A549 (cell line): ENCODE measurements at regions of chr15 and their contacts with region 1.

Region 1: DNA sequence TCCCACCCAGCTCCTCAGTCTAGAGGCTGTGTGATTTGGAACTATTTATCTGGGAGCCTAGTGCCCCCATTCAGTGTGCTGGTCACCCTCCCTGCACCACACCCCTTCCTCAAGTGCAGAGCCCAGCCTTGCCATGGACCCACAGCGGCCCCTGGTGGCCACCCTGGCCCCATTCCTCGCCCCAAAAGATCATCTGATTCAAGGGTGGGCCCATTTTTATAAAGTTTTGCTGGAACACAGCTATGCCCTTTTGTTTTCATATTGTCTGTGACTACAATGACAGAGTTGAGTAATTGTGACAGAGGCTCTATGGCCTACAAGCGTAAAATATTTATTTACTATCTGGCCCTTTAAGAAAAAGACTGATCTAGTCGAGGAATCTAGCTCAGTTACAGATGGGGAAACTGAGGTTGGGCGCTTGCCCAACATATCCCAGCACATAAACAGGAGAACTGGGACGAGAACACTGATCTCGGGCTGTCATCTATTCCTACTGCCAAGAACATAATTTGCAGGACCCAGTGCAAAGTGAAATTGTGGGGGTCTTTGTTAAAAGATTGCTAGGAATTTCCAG is 1.8 kb downstream of the FES start:
- DNase-seq: peak in 1 of 2 experiments; percentile 61
- ATAC-seq: peak; percentile 57 to 82; a peak in 5 of 6 replicates
- H3K4me3 ChIP-seq: no peak overlapping the region
- H3K27ac ChIP-seq: peak overlapping the region in 1 of 2 experiments; percentile 19; a peak in 1 of 6 replicates
- H3K4me1 ChIP-seq: no peaks in the 10 kb centered on the region
- CTCF ChIP-seq: peak; percentile 99
- EP300 ChIP-seq: no peak
- POLR2A ChIP-seq: no peak
- RAD21 ChIP-seq: peak; percentile 100

Region 2: DNA sequence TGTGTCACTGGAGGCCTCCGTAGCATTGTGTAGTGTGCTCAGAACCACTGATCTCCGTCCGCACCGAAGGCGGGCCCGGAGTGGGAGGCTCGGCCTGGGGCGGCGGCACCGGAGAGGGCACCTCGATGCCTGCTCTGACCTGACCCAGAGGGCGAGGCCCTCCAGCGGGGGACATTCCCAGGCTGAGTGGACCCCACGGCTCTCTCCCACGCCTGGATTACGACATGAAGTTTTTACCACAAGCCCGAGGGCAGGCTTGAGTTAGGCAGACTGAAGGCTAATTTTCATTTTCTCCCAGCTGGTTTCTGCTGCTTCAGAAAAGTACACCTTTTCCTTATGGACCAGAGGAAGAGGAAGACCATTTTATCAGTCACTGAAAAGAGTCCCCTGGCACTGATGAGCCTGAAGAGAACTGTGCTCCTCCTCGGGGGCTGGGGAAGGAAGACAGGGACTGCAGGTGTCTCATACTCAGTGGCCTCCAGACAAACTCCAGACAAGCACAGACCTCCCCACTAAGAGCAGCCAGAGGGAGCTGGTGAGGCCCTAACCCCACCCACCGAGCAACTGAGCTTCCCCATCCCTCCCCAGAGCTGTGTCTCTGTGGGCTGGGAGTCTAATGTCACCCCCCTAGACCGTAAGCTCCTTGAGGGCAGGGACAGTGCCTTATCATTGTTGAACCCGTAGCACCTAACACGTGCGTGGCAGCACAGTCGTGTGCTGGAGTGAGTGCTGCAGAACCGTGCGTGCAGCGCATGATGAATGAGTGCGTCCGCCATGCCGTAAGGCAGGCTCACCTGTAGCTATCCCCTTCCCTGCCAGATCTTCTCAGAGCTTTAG is 243.4 kb before region 1 on chr15:
- CTCF ChIA-PET with region 1: interaction called, 265 read pairs
- POLR2A ChIA-PET with region 1: no interaction called
- DNase-seq: no peak
- ATAC-seq: peak in 1 of 2 experiments; percentile 21; a peak in 1 of 6 replicates
- H3K4me3 ChIP-seq: no peak overlapping the region
- H3K27ac ChIP-seq: no peak overlapping the region
- H3K4me1 ChIP-seq: peaks cover 4% of the 10 kb centered on the region; the same call in 2 of the 3 replicates
- CTCF ChIP-seq: no peak
- EP300 ChIP-seq: no peak
- POLR2A ChIP-seq: no peak; the same call in 1 of the 2 replicates
- RAD21 ChIP-seq: no peak

Region 3: GRCh38 chr15:90691982-90692773 is 193.9 kb before region 1 on chr15:
- CTCF ChIA-PET with region 1: interaction called, 19 read pairs
- POLR2A ChIA-PET with region 1: no interaction called
- DNase-seq: no peak
- ATAC-seq: no peak
- H3K4me3 ChIP-seq: no peak overlapping the region
- H3K27ac ChIP-seq: no peak overlapping the region
- H3K4me1 ChIP-seq: no peaks in the 10 kb centered on the region
- CTCF ChIP-seq: no peak
- EP300 ChIP-seq: no peak
- POLR2A ChIP-seq: no peak
- RAD21 ChIP-seq: no peak

Region 4: GRCh38 chr15:90762109-90762508 is 124.0 kb before region 1 on chr15:
- CTCF ChIA-PET with region 1: interaction called, 21 read pairs
- POLR2A ChIA-PET with region 1: no interaction called
- DNase-seq: no peak
- ATAC-seq: no peak
- H3K4me3 ChIP-seq: no peak overlapping the region
- H3K27ac ChIP-seq: no peak overlapping the region
- H3K4me1 ChIP-seq: no peaks in the 10 kb centered on the region
- CTCF ChIP-seq: no peak
- EP300 ChIP-seq: no peak
- POLR2A ChIP-seq: no peak
- RAD21 ChIP-seq: no peak

Region 5: DNA sequence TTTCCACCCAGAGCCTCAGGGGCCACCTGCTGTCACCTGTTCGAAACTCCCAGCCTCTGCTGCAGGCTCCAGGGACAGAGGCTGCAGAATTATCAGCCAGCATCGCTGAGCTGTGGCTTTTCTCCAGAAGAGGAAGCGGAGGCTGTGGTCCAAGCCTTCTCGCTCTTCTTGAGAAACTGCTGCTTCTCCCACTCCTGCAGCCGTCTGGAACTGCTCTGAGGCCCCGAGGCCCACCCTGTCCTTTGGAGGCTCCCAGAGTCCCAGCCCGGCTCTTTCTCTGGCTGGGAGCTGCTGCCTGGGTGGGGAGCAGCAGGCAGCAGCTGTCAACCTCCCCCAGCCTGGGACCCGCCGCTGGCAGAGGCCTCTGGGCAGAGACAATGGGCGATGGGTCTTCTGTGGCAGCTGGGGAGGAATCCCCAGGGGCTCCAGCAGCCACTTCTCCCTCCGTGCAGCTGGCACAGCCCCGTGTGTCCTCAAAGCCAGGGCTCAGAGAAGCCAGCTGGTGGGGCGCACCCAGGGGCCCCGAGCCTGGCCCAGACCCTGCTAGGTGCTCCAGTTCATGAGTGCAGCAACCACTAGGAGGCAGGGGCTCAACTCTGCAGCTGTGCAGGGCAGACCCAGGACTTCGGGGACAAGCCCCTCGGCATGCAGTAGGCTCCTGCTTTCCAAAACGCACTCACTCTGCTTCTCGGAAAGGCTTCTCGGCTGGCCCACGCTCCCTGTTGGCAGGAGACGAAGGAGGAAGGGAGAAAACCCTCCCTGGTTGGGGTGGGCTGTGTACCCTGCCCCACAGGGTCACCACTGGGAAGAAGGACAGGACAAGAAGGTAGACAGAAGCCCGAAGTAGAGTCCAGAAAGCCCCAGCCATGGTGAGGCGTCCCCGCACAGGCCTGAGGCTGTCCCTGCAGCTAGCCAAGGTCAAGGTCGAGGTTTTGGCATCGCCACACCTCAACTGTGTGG is 67.6 kb before region 1 on chr15:
- CTCF ChIA-PET with region 1: interaction called, 19 read pairs
- POLR2A ChIA-PET with region 1: no interaction called
- DNase-seq: no peak
- ATAC-seq: peak in 1 of 2 experiments; percentile 68; a peak in 3 of 6 replicates
- H3K4me3 ChIP-seq: no peak overlapping the region
- H3K27ac ChIP-seq: no peak overlapping the region
- H3K4me1 ChIP-seq: peaks cover 3% of the 10 kb centered on the region; the same call in 1 of the 3 replicates
- CTCF ChIP-seq: no peak
- EP300 ChIP-seq: no peak
- POLR2A ChIP-seq: no peak
- RAD21 ChIP-seq: peak in 1 of 2 experiments; percentile 25; a peak in 2 of 5 replicates

Region 6: GRCh38 chr15:90869601-90870353 is 16.4 kb before region 1 on chr15:
- CTCF ChIA-PET with region 1: interaction called, 59 read pairs
- POLR2A ChIA-PET with region 1: no interaction called
- DNase-seq: peak in 1 of 2 experiments; percentile 73
- ATAC-seq: peak in 1 of 2 experiments; percentile 26; a peak in 3 of 6 replicates
- H3K4me3 ChIP-seq: peak overlapping the region; percentile 4; the same call in 1 of the 3 replicates
- H3K27ac ChIP-seq: peak overlapping the region; percentile 85 to 97
- H3K4me1 ChIP-seq: peaks cover 69% of the 10 kb centered on the region
- CTCF ChIP-seq: no peak
- EP300 ChIP-seq: no peak
- POLR2A ChIP-seq: no peak
- RAD21 ChIP-seq: no peak